Activated naive CD4-positive, alpha-beta T cell treated with anti-CD3 and anti-CD28 coated beads, Interleukin-2, amount 10 ng/mL, durations not matched to agents 7 days and 5 days (primary cell): ENCODE measurements at regions of chr1 and their contacts with region 1.

Region 1: DNA sequence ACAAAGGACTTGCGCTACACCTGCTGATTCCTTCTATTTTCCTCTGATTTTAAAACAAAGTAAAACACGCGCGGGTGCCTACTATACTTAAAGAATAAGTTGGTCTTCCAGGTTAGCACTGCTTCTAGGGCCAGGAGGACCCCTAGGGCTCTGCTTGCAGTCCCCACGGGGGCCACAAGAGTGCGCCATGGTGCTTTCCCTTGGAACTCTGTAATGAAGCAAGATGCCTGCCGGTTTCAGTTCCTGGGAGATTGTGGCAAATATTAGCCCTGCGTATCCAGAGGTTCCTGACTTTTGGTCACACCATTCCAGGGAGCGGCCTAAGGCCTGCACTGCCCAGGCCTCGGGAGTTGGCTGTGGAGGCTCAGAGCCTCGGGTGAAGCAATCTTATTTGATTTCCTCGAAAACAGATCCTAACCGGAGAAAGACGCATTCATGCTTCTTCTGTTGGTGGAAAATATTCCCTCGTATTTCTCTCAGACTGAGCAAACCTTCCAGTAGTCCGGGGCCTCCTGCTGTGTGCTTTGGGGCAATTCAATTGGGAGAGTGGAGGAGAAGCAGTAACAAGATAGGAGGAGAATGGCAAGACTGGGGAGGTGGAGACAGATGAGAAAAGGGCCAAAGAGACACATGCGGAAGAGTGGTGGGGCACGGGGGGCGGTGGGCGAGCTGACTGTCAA is 25.3 kb downstream of the ADAM30 start:
- DNase-seq: peak; percentile 83
- H3K4me3 Mint-ChIP-seq: no peak overlapping the region
- H3K27ac Mint-ChIP-seq: no peak overlapping the region
- H3K4me1 Mint-ChIP-seq: peaks cover 8% of the 10 kb centered on the region
- H3K27me3 Mint-ChIP-seq: peaks cover 35% of the 10 kb centered on the region

Region 2: GRCh38 chr1:119859647-119860046 is 11.4 kb before region 1 on chr1:
- CTCF ChIA-PET with region 1: interaction called, 13 read pairs
- DNase-seq: peak; percentile 36
- H3K4me3 Mint-ChIP-seq: no peak overlapping the region
- H3K27ac Mint-ChIP-seq: peak overlapping the region; percentile 64
- H3K4me1 Mint-ChIP-seq: peaks cover 24% of the 10 kb centered on the region
- H3K27me3 Mint-ChIP-seq: peaks cover 11% of the 10 kb centered on the region

Region 3: GRCh38 chr1:119885903-119886783 is 15.1 kb after region 1 on chr1:
- CTCF ChIA-PET with region 1: interaction called, 24 read pairs
- DNase-seq: peak; percentile 77
- H3K4me3 Mint-ChIP-seq: no peak overlapping the region
- H3K27ac Mint-ChIP-seq: no peak overlapping the region
- H3K4me1 Mint-ChIP-seq: peaks cover 4% of the 10 kb centered on the region
- H3K27me3 Mint-ChIP-seq: peaks cover 23% of the 10 kb centered on the region

Region 4: GRCh38 chr1:119968068-119968492 is 97.0 kb after region 1 on chr1:
- CTCF ChIA-PET with region 1: interaction called, 12 read pairs
- DNase-seq: peak; percentile 88
- H3K4me3 Mint-ChIP-seq: no peak overlapping the region
- H3K27ac Mint-ChIP-seq: peak overlapping the region; percentile 64
- H3K4me1 Mint-ChIP-seq: peaks cover 14% of the 10 kb centered on the region
- H3K27me3 Mint-ChIP-seq: no peaks in the 10 kb centered on the region